ENCODE measurements at regions of chr1 and their contacts with region 1.

Region 1: GRCh38 chr1:109112652-109113285 is 1.1 kb upstream of the ELAPOR1 start:
- DNase-seq: no peak
- H3K4me3 ChIP-seq: peak overlapping the region; percentile 25
- CTCF ChIP-seq: peak; percentile 98

Region 2: DNA sequence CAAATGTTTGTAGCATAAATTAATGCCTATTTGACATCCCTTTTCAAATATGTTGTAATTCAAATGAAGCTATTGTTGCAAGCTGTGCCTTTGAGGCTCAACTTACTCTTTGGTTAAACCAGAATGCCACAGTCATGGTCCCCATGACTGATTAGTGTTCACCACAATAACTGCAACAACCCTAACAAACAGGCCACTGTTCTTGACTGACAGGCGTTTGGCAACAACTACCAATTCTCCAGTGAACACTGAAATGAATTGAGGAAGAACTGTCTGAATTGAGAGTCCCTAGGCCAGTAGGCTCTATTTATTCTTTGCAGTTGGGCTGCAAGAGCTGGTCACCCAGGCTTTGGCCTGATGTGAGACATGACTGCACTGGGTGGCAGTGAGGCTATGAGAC is 28.8 kb before region 1 on chr1:
- CTCF ChIA-PET with region 1: interaction called, 11 read pairs
- POLR2A ChIA-PET with region 1: no interaction called
- DNase-seq: no peak
- H3K4me3 ChIP-seq: no peak overlapping the region
- CTCF ChIP-seq: no peak

Region 3: DNA sequence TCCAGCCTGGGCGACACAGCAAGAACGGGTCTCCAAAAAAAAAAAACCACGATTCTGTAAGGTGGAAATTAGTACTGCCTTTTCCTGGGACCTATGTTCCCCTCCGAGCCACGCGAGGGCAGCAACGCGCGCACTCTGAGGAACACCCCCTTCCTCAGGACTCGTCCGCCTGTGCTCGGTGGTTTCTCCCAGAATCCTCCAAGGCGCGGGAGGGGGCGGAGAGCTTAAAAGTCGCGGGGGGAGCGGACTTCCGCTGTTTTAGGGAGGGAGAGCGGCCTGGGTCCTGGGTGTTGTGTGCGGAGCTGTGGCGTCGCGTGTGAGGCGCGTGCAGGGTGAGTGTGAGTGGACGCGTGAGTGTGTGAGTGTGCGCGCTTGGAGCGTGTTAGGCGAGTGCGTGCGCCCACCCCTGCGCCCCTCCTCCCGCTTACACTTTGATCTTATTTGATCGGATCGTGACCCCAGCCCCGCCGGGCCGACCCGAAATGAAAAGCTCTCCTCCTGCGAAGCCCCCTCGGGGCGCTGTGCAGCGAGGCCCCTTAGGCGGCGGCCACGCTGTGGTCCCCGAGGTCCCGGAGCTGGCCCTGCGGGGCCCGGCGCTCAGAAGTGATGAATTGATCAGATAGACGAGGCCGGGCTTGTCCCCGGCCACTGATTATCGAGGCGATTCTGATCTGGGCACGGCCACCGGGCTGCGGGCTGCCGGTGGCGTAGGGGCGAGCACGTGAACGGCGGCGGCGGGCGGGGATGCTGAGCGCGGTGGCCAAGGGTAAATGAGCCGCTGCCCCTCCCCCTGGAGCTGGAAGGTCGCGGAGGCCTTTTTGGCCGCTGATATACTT is 12.6 kb before region 1 on chr1:
- CTCF ChIA-PET with region 1: interaction called, 62 read pairs
- POLR2A ChIA-PET with region 1: interaction called, 10 read pairs
- DNase-seq: peak; percentile 82
- H3K4me3 ChIP-seq: peak overlapping the region; percentile 99
- CTCF ChIP-seq: peak; percentile 94

Region 4: GRCh38 chr1:109151164-109151990 is 38.6 kb after region 1 on chr1:
- CTCF ChIA-PET with region 1: interaction called, 26 read pairs
- POLR2A ChIA-PET with region 1: no interaction called
- DNase-seq: no peak
- H3K4me3 ChIP-seq: no peak overlapping the region
- CTCF ChIP-seq: no peak

Region 5: DNA sequence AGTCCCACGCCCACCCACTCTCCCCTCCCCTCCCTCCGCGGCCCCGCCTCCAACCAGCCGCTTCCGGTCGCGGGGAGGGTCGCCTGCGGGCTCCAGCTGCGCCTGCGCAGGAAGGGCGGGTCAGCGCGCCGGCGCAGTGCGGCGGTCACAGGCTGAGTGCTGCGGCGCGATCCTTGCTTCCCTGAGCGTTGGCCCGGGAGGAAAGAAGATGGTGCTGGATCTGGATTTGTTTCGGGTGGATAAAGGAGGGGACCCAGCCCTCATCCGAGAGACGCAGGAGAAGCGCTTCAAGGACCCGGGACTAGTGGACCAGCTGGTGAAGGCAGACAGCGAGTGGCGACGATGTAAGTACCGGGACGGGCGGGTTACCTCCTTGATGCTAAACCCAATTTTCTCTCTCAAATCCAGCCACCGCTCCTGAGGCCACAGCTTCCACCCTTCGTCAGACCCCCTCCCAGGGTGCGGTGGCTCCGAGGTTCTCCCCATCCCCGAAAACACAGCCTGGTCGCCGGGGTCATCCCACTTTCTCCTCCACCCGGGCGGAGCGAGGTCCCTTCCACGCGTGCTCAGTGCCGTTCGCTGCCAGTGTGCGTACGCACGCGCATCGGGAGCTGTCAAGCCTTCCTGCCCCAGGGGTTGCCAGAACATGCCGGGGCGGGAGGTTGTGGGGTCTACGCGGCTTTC is 101.2 kb after region 1 on chr1 and contains the start of gene SARS1:
- CTCF ChIA-PET with region 1: interaction called, 13 read pairs
- POLR2A ChIA-PET with region 1: no interaction called
- DNase-seq: no peak
- H3K4me3 ChIP-seq: peak within 1 kb of the TSS; percentile 98
- CTCF ChIP-seq: no peak

Measured in AG04449 (cell line).